Sigmoid colon (tissue), 7 donors: ENCODE measurements at regions of chr21 and their contacts with region 1.

Region 1: DNA sequence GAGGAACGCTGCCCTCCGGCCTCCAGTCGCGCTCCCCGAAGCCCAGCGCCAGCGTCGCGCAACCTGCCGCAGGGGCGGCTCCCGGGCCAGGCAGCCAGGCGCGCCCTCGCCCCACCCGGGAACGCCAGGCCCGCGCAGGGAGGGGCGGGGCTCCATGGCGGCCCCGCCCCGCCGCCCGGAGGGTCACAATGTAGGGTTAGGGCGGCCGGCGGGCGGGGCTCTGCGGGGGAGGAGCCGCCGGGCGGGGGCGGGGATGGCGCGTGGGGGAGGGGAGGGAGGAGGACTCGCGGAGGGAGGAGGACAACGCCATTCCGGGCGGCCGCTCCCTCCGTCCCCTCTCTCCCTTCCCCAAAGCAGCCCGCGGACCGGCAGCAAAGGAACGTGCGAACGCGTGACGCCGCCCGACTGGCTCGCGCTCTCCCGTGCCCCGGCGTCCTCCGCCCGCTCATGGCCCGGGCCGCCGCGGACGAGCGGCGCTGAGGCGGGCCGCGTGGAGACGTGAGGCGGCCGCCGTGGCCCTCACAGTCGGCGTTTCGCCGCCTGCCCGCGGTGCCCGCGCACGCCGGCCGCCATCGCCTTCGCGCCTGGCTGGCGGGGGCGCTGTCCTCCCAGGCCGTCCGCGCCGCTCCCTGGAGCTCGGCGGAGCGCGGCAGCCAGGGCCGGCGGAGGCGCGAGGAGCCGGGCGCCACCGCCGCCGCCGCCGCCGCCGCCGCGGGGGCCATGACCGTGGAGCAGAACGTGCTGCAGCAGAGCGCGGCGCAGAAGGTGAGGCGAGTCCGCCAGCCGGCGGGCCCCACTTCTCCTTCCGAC is at the start of gene USP25:
- DNase-seq: peak; percentile 96
- H3K4me3 ChIP-seq: peak within 1 kb of the TSS; percentile 82 to 92 (median 87)
- H3K27ac ChIP-seq: peak within 1 kb of the TSS; percentile 93 to 98 (median 95)
- H3K4me1 ChIP-seq: peaks cover 0 to 32% (median 17%) of the 10 kb centered on the region in 4 donors
- H3K27me3 ChIP-seq: no peaks in the 10 kb centered on the region
- CTCF ChIP-seq: no peak
- EP300 ChIP-seq: no peak
- POLR2A ChIP-seq: no peak
- total RNA-seq, gene USP25: 37.9 to 54.0 (median 49.0) TPM

Region 2: DNA sequence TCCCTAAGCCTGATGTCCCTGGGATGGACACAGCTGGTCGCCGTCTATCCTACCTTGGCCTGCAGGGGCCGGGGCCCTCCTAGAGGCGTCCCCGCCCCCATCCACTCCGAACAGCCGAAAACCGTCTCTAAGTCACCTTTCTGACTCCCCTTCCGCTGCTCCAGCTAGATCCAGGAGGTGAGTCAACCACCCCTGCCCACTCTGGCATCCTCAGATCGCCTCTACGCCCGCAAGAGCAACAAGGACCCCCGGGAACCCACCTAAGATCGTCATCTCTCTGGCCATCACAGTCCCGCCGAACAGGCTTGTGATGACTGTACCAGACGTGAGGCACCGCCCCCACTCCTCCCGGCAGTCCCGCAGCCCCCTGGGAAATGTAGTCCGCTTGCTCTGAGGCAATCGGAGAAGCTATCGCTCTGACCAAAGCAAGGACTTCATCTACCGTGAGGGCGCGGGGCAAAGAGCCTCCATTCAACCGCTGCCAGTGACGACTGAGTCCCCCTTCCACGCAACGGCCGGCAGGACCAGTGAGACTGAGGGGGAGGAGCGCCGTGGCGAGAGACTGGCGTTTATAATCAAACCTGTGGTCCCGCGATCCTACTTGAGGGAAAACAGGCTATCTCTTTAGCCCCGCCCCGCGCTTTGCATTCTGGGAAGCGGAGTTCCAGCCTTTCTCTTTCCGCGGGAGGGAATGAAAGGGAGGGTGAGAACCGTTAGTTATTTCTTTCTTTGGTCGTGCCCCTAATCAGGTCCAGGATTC is 1346.9 kb before region 1 on chr21 and contains the start of gene HSPA13:
- intact Hi-C with region 1: loop called (anchors 10 kb)
- DNase-seq: peak; percentile 100
- H3K4me3 ChIP-seq: peak within 1 kb of the TSS; percentile 62 to 88 (median 80)
- H3K27ac ChIP-seq: peak within 1 kb of the TSS; percentile 90 to 95 (median 92)
- H3K4me1 ChIP-seq: peaks cover 0 to 29% (median 17%) of the 10 kb centered on the region in 4 donors
- H3K27me3 ChIP-seq: no peaks in the 10 kb centered on the region
- CTCF ChIP-seq: no peak
- EP300 ChIP-seq: peak in 1 of 4 donors; percentile 28
- POLR2A ChIP-seq: peak; percentile 50 to 61
- total RNA-seq, gene HSPA13: 15.2 to 23.2 (median 15.8) TPM

Region 3: DNA sequence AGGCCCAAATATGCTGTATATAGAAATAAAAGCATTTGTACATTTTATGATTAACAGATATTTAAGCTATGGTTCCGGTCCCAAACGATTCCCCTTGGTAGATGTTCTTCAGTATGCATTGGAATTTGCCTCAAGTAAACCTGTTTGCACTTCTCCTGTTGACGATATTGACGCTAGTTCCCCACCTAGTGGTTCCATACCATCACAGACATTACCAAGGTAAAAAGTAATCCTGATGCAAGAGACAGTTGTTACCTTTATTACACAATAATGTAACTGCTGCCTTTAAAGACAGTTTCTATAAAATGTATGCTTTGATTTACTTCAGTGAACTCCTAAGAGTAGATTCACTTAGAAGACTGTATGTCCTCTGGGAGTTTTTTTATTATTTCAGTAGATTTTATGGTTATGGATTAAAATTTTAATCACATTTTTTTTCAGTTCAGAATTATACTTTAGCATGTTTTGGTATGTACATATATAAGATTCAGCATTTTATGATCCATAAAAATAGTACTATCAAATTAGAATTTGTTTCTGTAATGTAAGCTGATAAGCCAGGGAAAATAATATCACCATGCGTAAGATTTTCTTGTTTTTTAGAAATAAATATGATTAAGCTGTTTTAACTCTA is 96.4 kb after region 1 on chr21:
- intact Hi-C with region 1: loop called (anchors 5 kb)
- DNase-seq: no peak
- H3K4me3 ChIP-seq: no peak overlapping the region
- H3K27ac ChIP-seq: no peak overlapping the region
- H3K4me1 ChIP-seq: peaks cover 0 to 15% (median under 1%) of the 10 kb centered on the region in 4 donors
- H3K27me3 ChIP-seq: no peaks in the 10 kb centered on the region
- CTCF ChIP-seq: peak in 3 of 4 experiments; percentile 18 to 43 (median 30)
- EP300 ChIP-seq: no peak
- POLR2A ChIP-seq: no peak

Region 4: DNA sequence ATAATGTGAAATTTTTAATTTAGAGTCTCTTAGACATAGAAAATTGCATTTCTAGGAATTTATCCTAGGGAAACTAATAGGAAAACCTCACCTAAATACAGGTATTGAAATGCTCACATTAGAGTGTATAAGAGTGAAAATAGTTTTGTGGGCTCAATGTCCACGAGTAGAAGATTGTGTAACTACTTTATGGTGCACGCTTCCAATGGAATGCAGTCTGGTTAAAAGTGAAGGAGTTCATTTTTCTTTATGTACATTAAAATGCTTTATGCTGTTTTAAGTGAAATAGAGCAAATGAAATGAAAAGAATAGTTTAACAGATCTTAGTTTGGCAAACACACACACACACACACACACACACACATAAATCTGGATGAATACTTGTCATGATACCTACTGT is 278.1 kb after region 1 on chr21:
- intact Hi-C with region 1: no loop called
- DNase-seq: no peak
- H3K4me3 ChIP-seq: no peak overlapping the region
- H3K27ac ChIP-seq: no peak overlapping the region
- H3K4me1 ChIP-seq: no peaks in the 10 kb centered on the region
- H3K27me3 ChIP-seq: no peaks in the 10 kb centered on the region
- CTCF ChIP-seq: no peak
- EP300 ChIP-seq: no peak
- POLR2A ChIP-seq: no peak

Region 5: GRCh38 chr21:17611414-17612022 is 1881.6 kb after region 1 on chr21:
- intact Hi-C with region 1: loop called (anchors 10 kb)
- DNase-seq: peak; percentile 94
- H3K4me3 ChIP-seq: peak overlapping the region; percentile 85 to 90 (median 88)
- H3K27ac ChIP-seq: peak overlapping the region; percentile 94 to 96 (median 96)
- H3K4me1 ChIP-seq: peaks cover 0 to 42% (median 36%) of the 10 kb centered on the region in 4 donors
- H3K27me3 ChIP-seq: no peaks in the 10 kb centered on the region
- CTCF ChIP-seq: peak in 1 of 4 experiments; percentile 18
- EP300 ChIP-seq: no peak
- POLR2A ChIP-seq: no peak